ENCODE measurements at regions of chr19 and their contacts with region 1.

Region 1: GRCh38 chr19:48271531-48272151 is 1.8 kb downstream of the ZNF114 start:
- DNase-seq: no peak
- ATAC-seq: no peak
- H3K4me3 ChIP-seq: peak overlapping the region; percentile 43 to 60 (median 50)
- H3K27ac ChIP-seq: peak overlapping the region in 2 of 4 donors; percentile 22 to 36
- H3K4me1 ChIP-seq: peaks cover 0 to 11% of the 10 kb centered on the region in 2 donors
- H3K27me3 ChIP-seq: peaks cover 8 to 21% (median 18%) of the 10 kb centered on the region in 3 donors
- CTCF ChIP-seq: no peak
- POLR2A ChIP-seq: no peak

Region 2: GRCh38 chr19:48290771-48291488 is 19.3 kb after region 1 on chr19:
- in situ Hi-C with region 1: no loop called
- intact Hi-C with region 1: loop called (anchors 1 kb)
- DNase-seq: peak; percentile 38 to 51
- ATAC-seq: peak; percentile 92 to 95
- H3K4me3 ChIP-seq: peak overlapping the region; percentile 34 to 49 (median 46)
- H3K27ac ChIP-seq: no peak overlapping the region
- H3K4me1 ChIP-seq: peaks cover 3 to 4% of the 10 kb centered on the region in 2 donors
- H3K27me3 ChIP-seq: peaks cover 3 to 8% (median 4%) of the 10 kb centered on the region in 3 donors
- CTCF ChIP-seq: peak; percentile 88 to 99 (median 93)
- POLR2A ChIP-seq: no peak

Region 3: GRCh38 chr19:48340995-48341394 is 69.4 kb after region 1 on chr19:
- in situ Hi-C with region 1: no loop called
- intact Hi-C with region 1: no loop called
- DNase-seq: peak; percentile 57 to 87
- ATAC-seq: peak; percentile 75 to 85
- H3K4me3 ChIP-seq: no peak overlapping the region
- H3K27ac ChIP-seq: peak overlapping the region; percentile 57 to 73 (median 62)
- H3K4me1 ChIP-seq: peaks cover 6% of the 10 kb centered on the region in 2 donors
- H3K27me3 ChIP-seq: no peaks in the 10 kb centered on the region
- CTCF ChIP-seq: no peak
- POLR2A ChIP-seq: no peak

Measured in gastrocnemius medialis (tissue), 4 donors.